Activated CD4-positive, alpha-beta T cell treated with anti-CD3 and anti-CD28 coated beads for 36 hours (primary cell): ENCODE measurements at regions of chr9 and their contacts with region 1.

Region 1: DNA sequence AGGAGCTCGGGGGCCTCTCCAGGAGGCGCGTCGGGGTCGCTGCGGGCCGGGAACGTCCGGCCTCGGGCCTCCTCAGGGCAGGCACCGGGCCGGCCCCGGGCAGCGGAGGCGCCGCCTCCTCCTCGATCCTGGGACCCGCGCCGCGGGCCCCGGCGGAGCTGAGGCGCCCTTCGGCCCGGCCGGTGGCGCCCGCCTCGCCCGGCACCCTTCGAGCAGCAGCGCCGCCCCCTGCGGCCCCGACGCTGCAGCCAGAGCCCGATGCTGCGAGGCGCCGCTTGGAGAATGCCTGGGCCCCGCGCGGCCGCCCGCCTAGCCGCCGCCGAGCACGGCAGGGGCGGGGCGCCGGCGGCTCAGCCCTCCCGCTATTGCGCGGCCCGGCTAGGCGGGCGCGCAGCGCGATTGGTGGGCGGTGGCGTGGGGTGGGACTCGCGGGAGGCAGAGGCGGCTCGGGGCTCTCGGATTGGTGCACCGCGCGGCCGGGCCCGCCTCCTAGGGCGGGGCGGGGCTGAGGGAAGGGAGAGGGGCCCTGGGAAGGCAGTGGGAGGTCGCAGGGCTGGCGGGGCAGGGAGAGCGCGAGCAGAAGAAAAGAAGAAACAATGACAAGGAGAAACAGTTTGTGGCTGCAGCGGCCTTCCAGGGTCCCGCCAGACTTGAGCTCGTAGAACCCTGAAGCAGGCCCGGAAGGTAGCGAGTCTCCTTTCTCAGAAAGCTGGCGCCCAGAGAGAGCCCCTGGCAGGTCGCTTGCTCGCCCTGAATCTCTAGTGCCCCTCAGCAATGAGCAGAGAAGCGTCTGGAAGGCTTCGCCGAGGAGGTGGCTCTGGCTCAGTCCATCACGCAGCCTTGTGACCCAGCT is at the start of gene EEIG1:
- DNase-seq: peak; percentile 99
- ATAC-seq: peak; percentile 87
- H3K4me3 Mint-ChIP-seq: peak within 1 kb of the TSS; percentile 97
- H3K27ac Mint-ChIP-seq: peak within 1 kb of the TSS; percentile 98
- H3K4me1 Mint-ChIP-seq: peaks cover 47% of the 10 kb centered on the region
- H3K27me3 Mint-ChIP-seq: no peaks in the 10 kb centered on the region
- total RNA-seq, gene EEIG1: 56.2 to 58.4 TPM

Region 2: DNA sequence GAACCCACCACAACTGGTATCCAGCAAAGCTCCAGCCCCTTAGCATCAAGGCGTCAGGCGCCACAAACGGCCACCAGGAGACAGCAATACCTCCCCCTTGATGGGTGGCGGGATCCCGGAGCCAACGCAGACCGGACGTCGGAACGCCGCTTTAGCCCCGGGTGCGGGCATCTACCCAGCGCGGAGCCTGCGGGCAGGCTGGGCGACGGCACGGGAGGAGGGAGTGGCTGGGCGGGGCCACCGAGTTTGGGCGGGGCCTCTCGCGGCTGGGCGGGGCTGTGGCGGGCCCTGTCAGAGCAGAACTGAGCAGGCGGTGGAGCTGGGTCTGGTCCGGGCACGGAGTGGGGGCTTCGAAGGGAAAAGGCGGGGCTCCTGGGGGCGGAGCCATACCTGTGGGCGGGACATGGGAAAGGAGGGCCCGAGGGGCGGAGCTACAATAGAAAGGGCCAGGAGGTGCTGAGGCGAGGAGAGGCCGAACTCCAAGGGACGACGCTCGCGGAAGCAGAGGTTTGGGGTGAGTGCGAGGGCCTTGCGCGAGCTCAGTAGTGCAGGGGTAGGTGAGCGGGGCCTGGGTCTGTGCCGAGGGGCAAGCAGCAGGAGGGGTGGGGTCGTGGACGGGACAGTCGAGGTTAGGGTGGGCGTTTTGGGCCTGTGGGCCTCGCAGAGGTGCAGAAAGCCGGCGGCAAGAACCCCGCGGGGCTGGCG is 756.6 kb before region 1 on chr9:
- CTCF ChIA-PET with region 1: no interaction called
- POLR2A ChIA-PET with region 1: no interaction called
- intact Hi-C with region 1: loop called in 1 of 2 experiments (anchors 10 kb)
- DNase-seq: peak; percentile 93
- ATAC-seq: peak; percentile 79
- H3K4me3 Mint-ChIP-seq: peak overlapping the region; percentile 68
- H3K27ac Mint-ChIP-seq: peak overlapping the region; percentile 16
- H3K4me1 Mint-ChIP-seq: peaks cover 24% of the 10 kb centered on the region
- H3K27me3 Mint-ChIP-seq: peaks cover 15% of the 10 kb centered on the region

Region 3: GRCh38 chr9:127776195-127776923 is 204.6 kb before region 1 on chr9:
- CTCF ChIA-PET with region 1: no interaction called
- POLR2A ChIA-PET with region 1: no interaction called
- intact Hi-C with region 1: no loop called
- DNase-seq: peak; percentile 86
- ATAC-seq: peak; percentile 42
- H3K4me3 Mint-ChIP-seq: peak overlapping the region; percentile 92
- H3K27ac Mint-ChIP-seq: peak overlapping the region; percentile 98
- H3K4me1 Mint-ChIP-seq: peaks cover 40% of the 10 kb centered on the region
- H3K27me3 Mint-ChIP-seq: no peaks in the 10 kb centered on the region

Region 4: GRCh38 chr9:127854184-127854806 is 126.6 kb before region 1 on chr9 and contains the start of gene ENG:
- CTCF ChIA-PET with region 1: no interaction called
- POLR2A ChIA-PET with region 1: no interaction called
- intact Hi-C with region 1: no loop called
- DNase-seq: peak; percentile 56
- ATAC-seq: peak; percentile 66
- H3K4me3 Mint-ChIP-seq: peak within 1 kb of the TSS; percentile 83
- H3K27ac Mint-ChIP-seq: peak within 1 kb of the TSS; percentile 82
- H3K4me1 Mint-ChIP-seq: peaks cover 23% of the 10 kb centered on the region
- H3K27me3 Mint-ChIP-seq: no peaks in the 10 kb centered on the region
- total RNA-seq, gene ENG: 13.9 to 15.2 TPM

Region 5: DNA sequence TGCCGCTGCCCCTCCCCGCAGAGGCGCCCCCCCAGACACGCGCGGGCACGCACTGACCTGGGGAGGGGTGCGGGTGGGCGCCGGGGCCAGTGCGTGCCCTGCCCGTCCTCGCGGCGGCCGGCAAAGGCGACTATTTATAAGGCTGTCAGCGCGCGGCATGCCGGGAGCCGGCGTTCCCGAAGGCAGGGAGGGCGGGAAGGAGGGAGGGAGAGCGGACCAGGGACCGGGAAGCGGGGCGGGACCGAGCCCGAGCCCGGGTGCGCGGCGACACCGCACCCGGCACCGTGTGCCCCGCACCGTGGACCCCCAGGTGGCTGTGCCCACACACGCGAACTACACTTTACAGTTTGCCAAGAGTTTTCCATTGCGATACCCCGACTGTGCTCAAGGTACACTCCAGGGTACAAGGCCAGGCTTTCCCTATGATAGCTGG is 103.3 kb before region 1 on chr9 and contains the start of gene AK1:
- CTCF ChIA-PET with region 1: no interaction called
- POLR2A ChIA-PET with region 1: no interaction called
- intact Hi-C with region 1: no loop called
- DNase-seq: no peak
- ATAC-seq: no peak
- H3K4me3 Mint-ChIP-seq: peak within 1 kb of the TSS; percentile 39
- H3K27ac Mint-ChIP-seq: no peak within 1 kb of the TSS
- H3K4me1 Mint-ChIP-seq: peaks cover 2% of the 10 kb centered on the region
- H3K27me3 Mint-ChIP-seq: peaks cover 8% of the 10 kb centered on the region
- total RNA-seq, gene AK1: 14.5 to 23.9 TPM

Region 6: DNA sequence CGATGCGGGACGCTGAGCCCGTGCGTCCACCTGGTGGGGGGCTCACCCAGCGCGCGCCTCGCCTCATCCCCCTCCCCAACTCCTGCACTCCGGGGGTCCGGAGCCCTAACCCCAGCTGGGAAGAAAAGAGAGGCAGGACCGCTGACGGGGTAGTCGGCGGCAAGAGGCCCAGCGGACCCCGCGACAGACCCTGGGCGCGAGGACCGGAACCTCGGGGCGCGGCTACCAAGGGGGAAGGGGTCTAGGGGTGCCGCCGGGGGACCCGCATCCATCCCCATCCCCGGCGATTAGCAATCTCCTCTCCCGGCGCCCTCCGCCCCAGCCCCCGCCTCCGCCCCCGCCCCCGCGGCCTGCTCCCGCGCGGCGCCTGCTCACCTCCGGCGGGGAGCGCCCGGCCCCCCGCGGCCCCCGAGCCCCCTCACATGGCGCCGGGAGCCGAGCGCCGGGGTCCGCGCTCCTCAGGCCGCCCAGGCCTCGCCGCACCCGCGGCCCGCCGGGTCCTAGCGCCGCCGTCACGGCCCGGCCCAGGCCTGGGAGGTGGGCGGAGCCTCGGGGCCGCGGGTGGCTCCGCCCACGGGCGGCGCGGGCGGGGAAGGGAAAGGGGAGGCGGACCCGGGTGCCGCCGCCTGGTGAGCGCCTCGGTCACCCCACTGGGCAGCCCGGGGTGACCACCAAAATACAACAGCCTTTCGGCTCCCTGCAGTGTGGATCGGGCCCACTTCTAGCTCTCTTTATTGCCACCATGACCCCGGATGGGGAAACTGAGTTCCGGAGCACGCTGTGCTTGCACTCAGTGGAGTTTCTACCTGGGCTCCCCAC is 81.6 kb before region 1 on chr9 and contains the start of gene ST6GALNAC6:
- CTCF ChIA-PET with region 1: no interaction called
- POLR2A ChIA-PET with region 1: no interaction called
- intact Hi-C with region 1: loop called in 1 of 2 experiments (anchors 2 kb)
- DNase-seq: peak; percentile 85
- ATAC-seq: peak; percentile 69
- H3K4me3 Mint-ChIP-seq: peak within 1 kb of the TSS; percentile 82
- H3K27ac Mint-ChIP-seq: peak within 1 kb of the TSS; percentile 87
- H3K4me1 Mint-ChIP-seq: peaks cover 35% of the 10 kb centered on the region
- H3K27me3 Mint-ChIP-seq: no peaks in the 10 kb centered on the region
- total RNA-seq, gene ST6GALNAC6: 46.3 to 63.3 TPM

Region 7: DNA sequence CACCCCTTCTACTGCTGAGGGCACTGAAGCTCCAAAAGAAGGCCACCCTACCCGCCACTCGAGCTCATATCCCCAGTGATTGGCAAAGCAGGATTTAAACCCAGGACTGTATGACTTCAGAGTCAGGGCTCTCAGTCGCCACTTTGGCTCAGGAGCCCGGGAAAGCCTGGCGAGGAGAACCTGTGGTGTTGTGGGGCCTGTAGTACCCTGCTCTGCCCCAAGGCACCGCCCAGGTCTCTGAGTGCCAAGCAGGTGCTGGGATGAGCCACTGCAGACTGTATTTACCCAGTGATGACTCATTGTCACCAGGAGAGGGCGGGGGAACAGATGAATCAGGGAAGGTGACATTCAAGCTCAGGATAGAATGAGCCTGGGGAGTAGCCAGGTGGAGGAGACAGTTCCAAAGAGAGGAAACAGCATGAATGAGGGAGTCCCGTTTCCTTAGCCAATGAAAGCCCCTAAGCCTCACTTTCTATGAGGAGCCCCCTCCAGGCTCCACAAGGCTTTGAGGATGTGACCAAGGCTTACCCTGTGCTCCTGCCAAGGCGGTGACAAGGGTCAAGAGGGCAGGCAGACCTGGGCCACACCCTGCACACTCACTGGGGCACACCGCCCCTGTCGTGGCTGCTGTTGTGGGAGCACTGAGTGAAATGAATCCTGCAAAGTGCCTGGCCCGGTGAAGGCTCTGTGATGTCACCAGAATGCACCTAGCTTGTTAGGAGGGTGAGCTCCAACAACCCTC is 25.5 kb before region 1 on chr9:
- CTCF ChIA-PET with region 1: interaction called, 9 read pairs
- POLR2A ChIA-PET with region 1: interaction called, 13 read pairs
- intact Hi-C with region 1: loop called in 1 of 2 experiments (anchors 1 kb)
- DNase-seq: peak; percentile 95
- ATAC-seq: peak; percentile 91
- H3K4me3 Mint-ChIP-seq: peak overlapping the region; percentile 51
- H3K27ac Mint-ChIP-seq: peak overlapping the region; percentile 87
- H3K4me1 Mint-ChIP-seq: peaks cover 89% of the 10 kb centered on the region
- H3K27me3 Mint-ChIP-seq: no peaks in the 10 kb centered on the region

Region 8: GRCh38 chr9:127970401-127971313 is 10.3 kb before region 1 on chr9:
- CTCF ChIA-PET with region 1: interaction called, 7 read pairs
- POLR2A ChIA-PET with region 1: interaction called, 8 read pairs
- intact Hi-C with region 1: loop called (anchors 1 kb)
- DNase-seq: peak; percentile 87
- ATAC-seq: peak; percentile 76
- H3K4me3 Mint-ChIP-seq: peak overlapping the region; percentile 69
- H3K27ac Mint-ChIP-seq: peak overlapping the region; percentile 92
- H3K4me1 Mint-ChIP-seq: peaks cover 97% of the 10 kb centered on the region
- H3K27me3 Mint-ChIP-seq: no peaks in the 10 kb centered on the region

Region 9: GRCh38 chr9:128026773-128027541 is 46.0 kb after region 1 on chr9:
- CTCF ChIA-PET with region 1: interaction called, 55 read pairs
- POLR2A ChIA-PET with region 1: interaction called, 12 read pairs
- intact Hi-C with region 1: loop called (anchors 1 to 2 kb)
- DNase-seq: peak; percentile 79
- ATAC-seq: peak; percentile 62
- H3K4me3 Mint-ChIP-seq: peak overlapping the region; percentile 65
- H3K27ac Mint-ChIP-seq: peak overlapping the region; percentile 94
- H3K4me1 Mint-ChIP-seq: peaks cover 91% of the 10 kb centered on the region
- H3K27me3 Mint-ChIP-seq: peaks cover 2% of the 10 kb centered on the region

Region 10: GRCh38 chr9:128409998-128410397 is 429.1 kb after region 1 on chr9:
- CTCF ChIA-PET with region 1: no interaction called
- POLR2A ChIA-PET with region 1: no interaction called
- intact Hi-C with region 1: no loop called
- DNase-seq: no peak
- ATAC-seq: no peak
- H3K4me3 Mint-ChIP-seq: no peak overlapping the region
- H3K27ac Mint-ChIP-seq: no peak overlapping the region
- H3K4me1 Mint-ChIP-seq: no peaks in the 10 kb centered on the region
- H3K27me3 Mint-ChIP-seq: peaks cover 34% of the 10 kb centered on the region